ENCODE measurements at regions of chr7 and their contacts with region 1.

Region 1: DNA sequence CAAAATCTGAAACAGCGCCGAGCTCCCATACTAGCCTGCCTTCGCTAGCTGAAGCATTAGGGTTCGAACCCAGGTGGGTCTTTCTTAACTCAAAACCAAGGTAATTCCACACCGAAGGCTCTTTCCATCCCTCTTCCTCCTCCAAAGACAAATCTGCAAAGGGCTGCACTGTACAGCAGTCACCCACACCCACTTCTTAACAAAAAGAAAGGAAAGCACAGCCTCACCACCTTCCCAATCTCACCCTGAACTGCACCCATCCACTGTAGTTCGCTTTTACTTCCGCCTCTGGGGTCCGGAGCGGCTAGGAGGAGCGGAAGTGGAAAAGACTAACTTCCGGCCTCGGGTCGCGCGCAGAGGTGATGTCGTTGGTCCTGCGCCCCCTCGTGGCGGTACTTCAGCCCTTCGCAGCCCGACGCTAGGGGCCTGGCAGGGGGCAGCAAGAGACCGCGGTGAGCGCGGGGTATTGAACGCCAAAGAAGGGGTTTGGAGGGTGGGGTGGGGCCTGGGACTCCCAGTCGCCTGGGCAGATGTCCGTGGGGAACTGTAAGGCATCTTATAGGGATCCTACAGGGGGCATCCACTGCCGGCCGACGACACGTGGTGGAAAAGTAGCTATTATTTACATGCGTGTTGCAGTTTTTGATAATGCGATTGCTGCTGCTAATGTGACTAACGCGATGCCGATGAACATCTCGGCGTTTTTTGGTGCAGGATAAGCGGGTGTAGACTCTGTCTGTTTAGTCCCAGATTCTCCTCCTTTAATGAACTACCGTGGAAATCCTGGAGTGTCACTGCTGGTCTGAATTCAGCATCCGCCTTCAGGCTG is at the start of gene MTERF1:
- DNase-seq: peak; percentile 85
- ATAC-seq: peak; percentile 94
- H3K4me3 ChIP-seq: peak within 1 kb of the TSS; percentile 68 to 92
- H3K27ac ChIP-seq: peak within 1 kb of the TSS; percentile 15
- H3K4me1 ChIP-seq: peaks cover 4 to 16% of the 10 kb centered on the region in 2 experiments; a peak in 3 of 4 replicates
- H3K27me3 ChIP-seq: no peaks in the 10 kb centered on the region
- CTCF ChIP-seq: peak; percentile 97 to 100 (median 98)
- POLR2A ChIP-seq: peak; percentile 79
- RAD21 ChIP-seq: peak; percentile 99
- total RNA-seq, gene MTERF1: 13.1 TPM

Region 2: GRCh38 chr7:91618776-91619765 is 261.6 kb before region 1 on chr7:
- CTCF ChIA-PET with region 1: no interaction called
- POLR2A ChIA-PET with region 1: no interaction called
- RAD21 ChIA-PET with region 1: no interaction called
- intact Hi-C with region 1: no loop called
- DNase-seq: no peak
- ATAC-seq: no peak
- H3K4me3 ChIP-seq: no peak overlapping the region
- H3K27ac ChIP-seq: no peak overlapping the region
- H3K4me1 ChIP-seq: no peaks in the 10 kb centered on the region
- H3K27me3 ChIP-seq: no peaks in the 10 kb centered on the region
- CTCF ChIP-seq: no peak
- POLR2A ChIP-seq: no peak
- RAD21 ChIP-seq: no peak

Region 3: GRCh38 chr7:91826377-91826776 is 54.2 kb before region 1 on chr7:
- CTCF ChIA-PET with region 1: interaction called, 14 read pairs
- POLR2A ChIA-PET with region 1: no interaction called
- RAD21 ChIA-PET with region 1: no interaction called
- intact Hi-C with region 1: loop called (anchors 1 kb)
- DNase-seq: peak; percentile 22
- ATAC-seq: peak; percentile 44; the same call in 1 of the 2 replicates
- H3K4me3 ChIP-seq: no peak overlapping the region
- H3K27ac ChIP-seq: no peak overlapping the region
- H3K4me1 ChIP-seq: peaks cover 0 to 6% of the 10 kb centered on the region in 2 experiments; a peak in 2 of 4 replicates
- H3K27me3 ChIP-seq: no peaks in the 10 kb centered on the region
- CTCF ChIP-seq: no peak
- POLR2A ChIP-seq: no peak
- RAD21 ChIP-seq: no peak

Region 4: GRCh38 chr7:91835846-91836368 is 44.7 kb before region 1 on chr7:
- CTCF ChIA-PET with region 1: interaction called, 14 read pairs
- POLR2A ChIA-PET with region 1: no interaction called
- RAD21 ChIA-PET with region 1: no interaction called
- intact Hi-C with region 1: no loop called
- DNase-seq: no peak
- ATAC-seq: peak; percentile 36; the same call in 1 of the 2 replicates
- H3K4me3 ChIP-seq: no peak overlapping the region
- H3K27ac ChIP-seq: no peak overlapping the region
- H3K4me1 ChIP-seq: peaks cover 0 to 10% of the 10 kb centered on the region in 2 experiments; a peak in 1 of 4 replicates
- H3K27me3 ChIP-seq: no peaks in the 10 kb centered on the region
- CTCF ChIP-seq: no peak
- POLR2A ChIP-seq: no peak
- RAD21 ChIP-seq: no peak

Region 5: DNA sequence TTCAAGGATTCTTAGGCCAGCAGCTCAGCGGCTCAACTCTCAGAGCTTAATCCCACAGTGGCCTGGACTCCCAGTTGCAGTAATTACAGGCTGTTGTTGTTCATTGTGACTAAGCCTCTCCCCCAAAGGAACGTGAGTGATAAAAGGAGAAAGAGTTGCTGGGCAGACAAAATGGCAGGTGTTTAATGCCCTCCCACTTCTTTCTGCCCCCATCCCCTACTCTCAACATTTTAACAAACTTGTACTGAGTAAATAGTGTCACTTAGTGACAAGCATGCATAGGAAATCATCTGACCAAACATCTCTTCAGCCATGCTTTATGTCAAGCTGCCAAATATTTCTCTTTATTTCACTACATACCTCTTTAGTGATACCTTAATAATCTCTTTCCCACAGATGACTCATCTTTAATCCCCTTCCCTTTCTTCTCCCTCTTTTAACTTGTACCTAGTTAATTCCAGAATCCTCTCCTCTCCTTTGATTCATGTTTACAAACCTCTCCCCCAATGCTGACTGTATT is 12.3 kb after region 1 on chr7:
- CTCF ChIA-PET with region 1: interaction called, 13 read pairs
- POLR2A ChIA-PET with region 1: no interaction called
- RAD21 ChIA-PET with region 1: no interaction called
- intact Hi-C with region 1: no loop called
- DNase-seq: peak; percentile 21
- ATAC-seq: peak; percentile 87
- H3K4me3 ChIP-seq: peak overlapping the region in 1 of 2 experiments; percentile 10; a peak in 1 of 4 replicates
- H3K27ac ChIP-seq: peak overlapping the region; percentile 38; the same call in 1 of the 2 replicates
- H3K4me1 ChIP-seq: peaks cover 12 to 22% of the 10 kb centered on the region in 2 experiments
- H3K27me3 ChIP-seq: no peaks in the 10 kb centered on the region
- CTCF ChIP-seq: no peak
- POLR2A ChIP-seq: no peak
- RAD21 ChIP-seq: no peak

Region 6: DNA sequence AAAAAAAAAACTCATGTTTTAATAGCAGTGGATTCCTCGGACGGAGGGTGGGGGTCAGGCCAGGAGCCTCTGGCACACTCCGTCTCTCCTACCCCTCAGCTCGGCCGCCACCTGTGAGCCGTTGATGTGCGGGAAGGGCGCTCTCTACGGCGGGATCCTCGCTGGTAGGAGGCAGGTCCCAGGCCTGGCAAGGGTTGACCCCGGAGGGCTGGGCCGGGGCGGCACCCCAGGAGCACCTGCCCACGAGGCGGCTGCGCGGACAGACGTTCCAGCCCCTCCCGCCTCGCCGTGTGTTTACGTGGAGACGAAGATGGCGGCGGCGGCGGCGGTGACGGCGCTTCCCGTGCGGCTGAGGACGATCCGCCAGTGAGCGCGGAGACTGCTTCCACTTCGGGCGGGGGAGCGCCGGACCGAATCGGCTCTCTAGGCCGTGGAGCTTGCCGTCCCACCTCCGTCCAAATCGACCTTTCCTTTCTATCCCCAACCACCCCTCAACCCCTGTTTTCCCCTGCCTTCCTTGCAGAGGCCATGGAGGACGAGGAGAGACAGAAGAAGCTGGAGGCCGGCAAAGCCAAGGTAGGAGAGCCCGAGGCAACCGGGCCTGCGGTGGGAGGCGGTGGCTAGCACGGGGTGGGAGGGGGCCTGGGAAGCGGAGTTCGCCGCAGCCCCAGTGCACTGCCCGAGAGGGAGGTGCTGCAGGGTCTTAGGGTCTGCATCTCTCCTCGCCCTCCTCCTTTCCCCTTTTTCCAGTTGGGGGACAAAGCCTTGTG is 60.1 kb after region 1 on chr7 and contains the start of gene AKAP9:
- CTCF ChIA-PET with region 1: no interaction called
- POLR2A ChIA-PET with region 1: interaction called, 4 read pairs
- RAD21 ChIA-PET with region 1: no interaction called
- intact Hi-C with region 1: loop called (anchors 5 kb)
- DNase-seq: peak; percentile 73
- ATAC-seq: peak; percentile 98
- H3K4me3 ChIP-seq: peak within 1 kb of the TSS; percentile 87 to 88
- H3K27ac ChIP-seq: peak within 1 kb of the TSS; percentile 61
- H3K4me1 ChIP-seq: peaks cover 0 to 18% of the 10 kb centered on the region in 2 experiments; a peak in 2 of 4 replicates
- H3K27me3 ChIP-seq: no peaks in the 10 kb centered on the region
- CTCF ChIP-seq: no peak
- POLR2A ChIP-seq: peak; percentile 88
- RAD21 ChIP-seq: peak; percentile 9; the same call in 1 of the 2 replicates
- total RNA-seq, gene AKAP9: 32.6 TPM

Measured in HCT116 (cell line).